ENCODE measurements at regions of chr4 and their contacts with region 1.

Region 1: DNA sequence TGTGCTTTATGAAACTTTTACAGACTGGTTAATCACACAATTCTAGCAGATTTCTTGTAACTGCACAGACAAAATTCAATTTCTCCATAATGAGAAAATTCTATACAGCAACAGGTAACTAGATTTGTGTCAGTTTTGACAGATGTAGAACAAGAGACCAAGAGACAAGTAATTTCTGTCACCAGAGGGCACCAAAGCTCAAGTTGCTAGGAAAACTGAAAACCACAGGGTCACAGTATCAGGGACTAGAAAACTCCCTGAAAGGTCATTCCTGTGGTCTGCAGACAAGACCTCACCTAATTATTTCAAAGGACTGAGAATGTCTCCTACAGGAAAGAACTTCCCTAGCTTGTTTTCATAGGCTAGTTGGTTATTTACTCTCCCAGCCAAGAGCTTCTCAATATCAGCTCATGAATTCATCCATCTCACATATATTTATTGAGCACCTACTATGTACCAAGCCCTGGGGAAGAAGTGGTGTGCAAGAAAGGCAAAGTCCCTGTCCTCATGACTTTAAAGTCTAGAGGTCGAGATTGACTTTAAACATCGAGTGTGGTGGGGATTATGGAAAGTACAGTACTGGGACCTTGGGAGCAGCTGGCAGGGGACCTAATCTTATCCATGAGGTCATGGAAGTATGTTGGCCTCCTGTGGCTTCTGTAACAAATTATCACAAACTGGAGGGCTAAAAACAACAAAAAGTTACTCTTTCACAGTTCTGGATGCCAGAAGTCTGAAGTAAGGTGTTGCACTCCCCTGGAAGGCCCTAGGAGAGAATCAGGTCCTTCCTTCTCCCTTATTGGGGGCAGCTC is 47.8 kb upstream of the SETD7 start:
- DNase-seq: peak in 7 of 9 donors; percentile 5 to 46 (median 33)
- ATAC-seq: peak; percentile 54
- H3K4me3 ChIP-seq: no peak overlapping the region
- H3K4me3 Mint-ChIP-seq: no peak overlapping the region
- H3K27ac ChIP-seq: no peak overlapping the region
- H3K27ac Mint-ChIP-seq: no peak overlapping the region
- H3K4me1 ChIP-seq: no peaks in the 10 kb centered on the region
- H3K4me1 Mint-ChIP-seq: peaks cover 13 to 23% (median 17%) of the 10 kb centered on the region in 7 donors
- H3K27me3 ChIP-seq: no peaks in the 10 kb centered on the region
- H3K27me3 Mint-ChIP-seq: peaks cover 10 to 21% (median 14%) of the 10 kb centered on the region in 5 donors

Region 2: GRCh38 chr4:139540632-139541031 is 63.1 kb before region 1 on chr4:
- CTCF ChIA-PET with region 1: interaction called, 10 read pairs
- POLR2A ChIA-PET with region 1: interaction called, 3 read pairs
- intact Hi-C with region 1: no loop called
- DNase-seq: no peak
- ATAC-seq: no peak
- H3K4me3 ChIP-seq: no peak overlapping the region
- H3K4me3 Mint-ChIP-seq: no peak overlapping the region
- H3K27ac ChIP-seq: no peak overlapping the region
- H3K27ac Mint-ChIP-seq: no peak overlapping the region
- H3K4me1 ChIP-seq: no peaks in the 10 kb centered on the region
- H3K4me1 Mint-ChIP-seq: peaks cover 0 to 5% (median 0%) of the 10 kb centered on the region in 7 donors
- H3K27me3 ChIP-seq: no peaks in the 10 kb centered on the region
- H3K27me3 Mint-ChIP-seq: no peaks in the 10 kb centered on the region

Region 3: DNA sequence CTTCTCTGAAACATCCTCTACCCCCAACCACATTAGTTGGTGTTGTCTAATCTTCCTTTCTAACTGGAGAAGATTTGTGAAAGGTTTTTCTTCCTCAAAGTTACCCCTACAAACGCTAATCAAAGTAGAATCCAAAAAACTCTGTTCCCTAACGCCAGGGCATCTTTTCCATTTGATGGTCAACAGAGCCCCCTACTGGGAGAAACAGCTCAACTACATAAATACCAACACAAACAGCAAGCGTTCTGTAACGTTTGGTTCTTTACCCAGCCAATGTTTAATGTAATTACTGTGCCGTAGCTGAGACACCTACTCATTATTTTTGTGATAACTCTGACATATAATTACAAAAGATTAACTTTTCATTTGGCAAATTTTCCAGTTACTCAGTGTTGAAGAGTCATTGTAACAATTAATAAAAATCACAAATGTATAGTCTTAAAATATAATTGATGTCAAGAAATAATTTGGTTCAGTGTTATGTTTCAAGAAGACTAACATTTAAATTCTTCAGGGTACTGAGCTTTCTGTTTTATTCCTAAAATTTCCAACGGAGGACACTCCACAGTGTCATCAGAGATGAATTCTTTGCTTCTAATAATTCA is 1247.4 kb after region 1 on chr4:
- CTCF ChIA-PET with region 1: no interaction called
- POLR2A ChIA-PET with region 1: no interaction called
- intact Hi-C with region 1: loop called in 1 of 2 experiments (anchors 10 kb)
- DNase-seq: peak in 1 of 9 donors; percentile 5
- ATAC-seq: peak; percentile 54
- H3K4me3 ChIP-seq: no peak overlapping the region
- H3K4me3 Mint-ChIP-seq: no peak overlapping the region
- H3K27ac ChIP-seq: no peak overlapping the region
- H3K27ac Mint-ChIP-seq: no peak overlapping the region
- H3K4me1 ChIP-seq: no peaks in the 10 kb centered on the region
- H3K4me1 Mint-ChIP-seq: peaks cover 0 to 2% (median 0%) of the 10 kb centered on the region in 7 donors
- H3K27me3 ChIP-seq: no peaks in the 10 kb centered on the region
- H3K27me3 Mint-ChIP-seq: peaks cover 20 to 56% (median 42%) of the 10 kb centered on the region in 5 donors